MCF 10A (cell line): ENCODE measurements at regions of chr6 and their contacts with region 1.

Region 1: DNA sequence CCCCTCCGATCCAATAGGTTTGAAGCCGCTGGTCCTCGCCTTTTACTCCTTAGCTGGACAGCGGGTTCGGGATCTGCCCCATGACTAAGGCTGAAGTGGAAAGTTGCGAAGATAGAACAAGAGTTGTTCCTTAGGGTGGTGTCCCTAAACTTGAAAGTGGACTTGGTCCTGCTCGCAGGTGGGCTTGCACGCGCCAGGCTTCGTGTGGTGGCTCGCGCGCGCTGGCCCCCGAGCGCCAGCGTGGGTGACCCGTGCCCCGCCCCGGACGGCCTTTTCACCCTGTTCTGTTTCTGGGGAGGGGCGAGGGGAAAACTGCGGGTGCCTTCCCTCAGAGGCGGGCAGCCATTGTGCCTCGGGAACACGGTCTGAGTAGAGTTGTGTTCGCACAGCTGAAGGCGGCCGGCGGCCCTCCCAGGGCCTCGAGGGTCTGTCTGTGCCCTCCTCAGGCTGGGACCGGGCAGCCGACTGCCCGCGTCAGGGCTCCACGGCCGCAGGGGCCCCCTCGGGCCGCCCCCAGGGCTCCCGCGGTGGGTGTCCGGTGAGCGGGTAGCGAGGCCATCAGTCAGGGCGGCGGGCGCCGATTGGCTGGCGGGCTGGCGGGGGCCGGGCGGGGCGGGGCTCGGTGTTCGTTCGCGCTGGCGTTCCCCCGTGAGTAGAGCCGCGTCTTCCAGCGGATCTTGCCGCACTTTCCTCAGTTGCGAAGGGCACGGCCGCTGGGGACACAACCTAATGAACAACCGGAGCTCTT is 33.0 kb downstream of the RREB1 start:
- DNase-seq: peak; percentile 80
- H3K4me3 Mint-ChIP-seq: peak overlapping the region; percentile 72
- H3K27ac Mint-ChIP-seq: peak overlapping the region; percentile 80
- H3K4me1 Mint-ChIP-seq: peaks cover 38% of the 10 kb centered on the region
- H3K27me3 Mint-ChIP-seq: no peaks in the 10 kb centered on the region
- CTCF ChIP-seq: no peak

Region 2: DNA sequence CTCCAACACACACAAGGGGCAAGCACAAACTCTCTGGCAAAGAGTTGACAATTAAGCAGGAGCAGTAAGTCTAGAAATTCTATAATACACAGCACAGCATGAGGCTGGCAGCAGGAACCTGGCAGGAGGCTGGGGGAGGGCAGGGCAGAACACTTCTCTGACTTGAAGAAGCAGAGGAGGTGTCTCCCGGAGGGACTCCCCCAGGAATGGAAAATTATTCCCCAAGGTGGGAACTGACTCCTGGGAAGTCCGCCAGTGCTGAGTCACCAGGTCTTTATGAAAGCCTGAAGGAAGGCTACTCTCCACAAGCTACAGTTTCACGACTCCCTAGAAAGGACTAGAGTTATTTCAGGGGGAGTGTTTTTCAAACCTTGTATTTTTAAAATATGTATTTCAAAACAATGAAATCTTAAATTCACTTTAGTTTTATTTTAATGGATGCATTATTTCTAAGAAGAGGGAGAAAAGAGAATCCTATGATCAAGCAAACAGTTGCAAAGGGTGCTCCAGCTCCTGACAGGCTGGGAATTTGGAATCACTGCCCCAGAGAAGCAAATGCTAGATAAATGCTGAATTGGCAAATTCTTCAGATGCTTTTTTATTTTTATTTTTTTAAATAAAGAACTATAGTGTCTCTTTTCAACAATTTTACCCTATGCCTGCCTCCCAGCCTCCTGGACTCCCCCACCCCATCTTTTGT is 359.5 kb before region 1 on chr6:
- CTCF ChIA-PET with region 1: no interaction called
- POLR2A ChIA-PET with region 1: no interaction called
- intact Hi-C with region 1: no loop called
- DNase-seq: peak; percentile 95
- H3K4me3 Mint-ChIP-seq: peak overlapping the region; percentile 36
- H3K27ac Mint-ChIP-seq: no peak overlapping the region
- H3K4me1 Mint-ChIP-seq: peaks cover 23% of the 10 kb centered on the region
- H3K27me3 Mint-ChIP-seq: no peaks in the 10 kb centered on the region
- CTCF ChIP-seq: no peak

Region 3: GRCh38 chr6:7058250-7058923 is 82.4 kb before region 1 on chr6:
- CTCF ChIA-PET with region 1: interaction called, 3 read pairs
- POLR2A ChIA-PET with region 1: interaction called, 11 read pairs
- intact Hi-C with region 1: no loop called
- DNase-seq: peak; percentile 99
- H3K4me3 Mint-ChIP-seq: peak overlapping the region; percentile 44
- H3K27ac Mint-ChIP-seq: peak overlapping the region; percentile 91
- H3K4me1 Mint-ChIP-seq: peaks cover 30% of the 10 kb centered on the region
- H3K27me3 Mint-ChIP-seq: no peaks in the 10 kb centered on the region
- CTCF ChIP-seq: no peak

Region 4: GRCh38 chr6:7112741-7113313 is 28.0 kb before region 1 on chr6:
- CTCF ChIA-PET with region 1: interaction called, 3 read pairs
- POLR2A ChIA-PET with region 1: interaction called, 105 read pairs
- intact Hi-C with region 1: no loop called
- DNase-seq: peak; percentile 20
- H3K4me3 Mint-ChIP-seq: peak overlapping the region; percentile 54
- H3K27ac Mint-ChIP-seq: peak overlapping the region; percentile 46
- H3K4me1 Mint-ChIP-seq: peaks cover 26% of the 10 kb centered on the region
- H3K27me3 Mint-ChIP-seq: no peaks in the 10 kb centered on the region
- CTCF ChIP-seq: no peak

Region 5: GRCh38 chr6:7129784-7130569 is 10.8 kb before region 1 on chr6:
- CTCF ChIA-PET with region 1: interaction called, 3 read pairs
- POLR2A ChIA-PET with region 1: interaction called, 16 read pairs
- intact Hi-C with region 1: no loop called
- DNase-seq: peak; percentile 89
- H3K4me3 Mint-ChIP-seq: peak overlapping the region; percentile 20
- H3K27ac Mint-ChIP-seq: peak overlapping the region; percentile 84
- H3K4me1 Mint-ChIP-seq: peaks cover 40% of the 10 kb centered on the region
- H3K27me3 Mint-ChIP-seq: no peaks in the 10 kb centered on the region
- CTCF ChIP-seq: no peak

Region 6: GRCh38 chr6:7154341-7155139 is 13.7 kb after region 1 on chr6:
- CTCF ChIA-PET with region 1: interaction called, 4 read pairs
- POLR2A ChIA-PET with region 1: interaction called, 23 read pairs
- intact Hi-C with region 1: no loop called
- DNase-seq: no peak
- H3K4me3 Mint-ChIP-seq: no peak overlapping the region
- H3K27ac Mint-ChIP-seq: peak overlapping the region; percentile 71
- H3K4me1 Mint-ChIP-seq: peaks cover 64% of the 10 kb centered on the region
- H3K27me3 Mint-ChIP-seq: no peaks in the 10 kb centered on the region
- CTCF ChIP-seq: no peak

Region 7: GRCh38 chr6:7261032-7261841 is 120.4 kb after region 1 on chr6:
- CTCF ChIA-PET with region 1: no interaction called
- POLR2A ChIA-PET with region 1: interaction called, 10 read pairs
- intact Hi-C with region 1: no loop called
- DNase-seq: peak; percentile 93
- H3K4me3 Mint-ChIP-seq: peak overlapping the region; percentile 87
- H3K27ac Mint-ChIP-seq: peak overlapping the region; percentile 88
- H3K4me1 Mint-ChIP-seq: peaks cover 24% of the 10 kb centered on the region
- H3K27me3 Mint-ChIP-seq: no peaks in the 10 kb centered on the region
- CTCF ChIP-seq: no peak